GM10248 (cell line): ENCODE measurements at regions of chr9 and their contacts with region 1.

Region 1: DNA sequence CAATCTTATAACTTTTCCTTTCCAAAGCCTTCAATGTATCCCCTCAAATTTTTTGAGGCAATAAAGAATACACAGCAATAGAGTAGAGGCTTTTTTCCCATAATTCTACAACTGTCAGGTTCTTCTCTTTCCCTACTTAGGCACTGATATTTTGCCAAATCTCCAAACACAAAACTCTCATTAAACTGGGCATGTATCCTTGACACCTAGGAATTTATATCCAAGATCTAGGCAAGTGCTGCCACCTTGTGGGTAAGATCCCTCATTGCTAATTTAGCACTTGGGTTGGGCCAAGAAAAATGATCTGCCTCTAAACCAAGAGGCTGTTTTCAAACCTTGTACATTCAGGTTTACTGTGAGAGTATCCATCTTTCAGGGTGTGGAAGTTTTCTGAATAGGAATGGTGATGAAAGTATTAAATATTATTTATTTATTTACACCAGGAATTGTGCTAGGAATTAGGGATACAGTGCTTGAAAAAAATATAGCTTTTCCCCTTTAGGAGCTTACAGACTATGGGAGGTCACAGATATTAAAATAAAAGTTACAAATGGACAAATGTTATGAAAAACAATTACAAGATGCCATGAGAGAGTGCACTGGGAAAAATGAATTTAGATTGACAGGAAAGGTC is 17.6 kb downstream of the TSTD2 start:
- DNase-seq: peak; percentile 63
- CTCF ChIP-seq: peak; percentile 82

Region 2: DNA sequence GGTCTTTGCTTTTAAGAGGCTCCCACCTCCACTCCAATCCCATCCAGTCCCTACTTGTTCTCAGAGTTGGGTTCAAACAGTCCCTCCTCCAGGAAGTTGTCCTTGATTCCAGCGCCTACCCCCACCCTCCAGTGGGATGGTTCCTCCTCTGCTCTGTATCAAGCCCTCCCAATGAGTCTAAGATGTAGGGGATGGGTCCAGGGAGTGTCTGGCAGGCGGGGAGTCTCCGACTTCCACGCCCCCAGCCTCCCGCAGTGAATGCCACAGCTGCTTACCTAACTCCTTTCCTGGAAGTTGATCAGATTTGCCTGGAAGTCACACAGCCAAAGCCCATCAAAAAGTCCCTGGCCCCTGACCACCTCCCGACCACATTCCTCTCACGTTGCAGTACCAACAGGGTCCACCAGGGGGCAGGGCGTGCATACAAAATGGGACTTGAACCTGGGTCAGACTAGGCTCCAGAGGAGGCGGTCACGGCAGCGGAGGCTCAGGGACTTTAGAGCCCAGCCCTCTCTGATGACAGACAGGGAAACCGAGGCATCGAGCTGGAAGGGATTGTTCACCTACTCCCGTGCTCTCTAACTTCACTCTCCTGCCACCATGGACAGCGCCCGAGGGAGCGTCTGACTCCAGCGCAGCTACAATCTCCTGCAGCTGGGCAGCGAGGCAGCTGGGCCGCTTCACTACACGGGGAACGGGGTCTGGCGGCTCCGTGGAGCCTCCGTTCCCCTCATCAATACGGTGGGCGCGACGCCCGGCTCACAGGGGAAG is 228.6 kb before region 1 on chr9:
- CTCF ChIA-PET with region 1: interaction called, 22 read pairs
- POLR2A ChIA-PET with region 1: no interaction called
- DNase-seq: peak; percentile 84
- CTCF ChIP-seq: peak; percentile 95

Region 3: GRCh38 chr9:97406620-97407177 is 208.9 kb before region 1 on chr9:
- CTCF ChIA-PET with region 1: interaction called, 13 read pairs
- POLR2A ChIA-PET with region 1: no interaction called
- DNase-seq: no peak
- CTCF ChIP-seq: no peak

Region 4: DNA sequence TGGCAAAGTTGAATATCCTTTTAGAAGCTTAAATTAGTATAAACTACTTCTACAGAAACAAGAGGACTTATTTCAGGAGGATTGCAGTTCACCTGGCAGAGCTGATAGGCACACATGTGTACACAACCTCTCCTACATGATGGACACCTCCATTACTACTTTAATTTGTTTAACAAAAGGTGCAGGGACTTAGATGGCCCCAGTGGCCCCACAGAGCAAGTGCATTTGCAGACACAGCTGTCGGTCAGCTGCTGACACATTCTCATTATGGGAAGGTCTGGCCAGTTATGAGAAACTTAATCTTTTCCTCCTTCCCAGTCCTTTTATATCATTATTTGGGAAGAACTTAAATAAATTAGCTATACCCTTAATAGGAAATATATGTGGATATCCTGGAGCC is 175.4 kb before region 1 on chr9:
- CTCF ChIA-PET with region 1: interaction called, 15 read pairs
- POLR2A ChIA-PET with region 1: no interaction called
- DNase-seq: no peak
- CTCF ChIP-seq: no peak

Region 5: GRCh38 chr9:97468658-97469448 is 146.7 kb before region 1 on chr9:
- CTCF ChIA-PET with region 1: interaction called, 402 read pairs
- POLR2A ChIA-PET with region 1: no interaction called
- DNase-seq: peak; percentile 69
- CTCF ChIP-seq: peak; percentile 92

Region 6: GRCh38 chr9:97632985-97633858 is 17.7 kb after region 1 on chr9 and contains the starts of genes NCBP1 and TSTD2:
- CTCF ChIA-PET with region 1: interaction called, 88 read pairs
- POLR2A ChIA-PET with region 1: interaction called, 3 read pairs
- DNase-seq: peak; percentile 94
- CTCF ChIP-seq: no peak

Region 7: GRCh38 chr9:97696803-97697601 is 81.4 kb after region 1 on chr9 and contains the start of gene XPA:
- CTCF ChIA-PET with region 1: interaction called, 10 read pairs
- POLR2A ChIA-PET with region 1: no interaction called
- DNase-seq: peak; percentile 99
- CTCF ChIP-seq: no peak

Region 8: DNA sequence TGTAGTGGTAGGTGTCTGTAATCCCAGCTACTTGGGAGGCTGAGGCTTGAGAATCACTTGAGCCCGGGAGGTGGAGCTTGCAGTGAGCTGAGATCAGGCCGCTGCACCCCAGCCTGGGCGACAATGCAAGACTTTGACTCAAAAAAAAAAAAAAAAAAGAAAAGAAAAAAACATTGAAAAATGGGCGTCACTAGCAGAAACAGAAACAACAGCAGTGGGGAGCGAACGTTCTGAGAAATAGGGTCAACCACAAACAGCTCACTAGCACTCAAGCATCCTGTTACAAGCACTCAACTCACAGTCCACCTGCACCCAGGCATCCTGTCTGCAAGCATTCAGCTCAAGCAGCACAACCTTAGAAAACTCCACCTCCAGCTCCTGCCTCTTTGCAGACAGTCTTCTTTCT is 486.3 kb after region 1 on chr9:
- CTCF ChIA-PET with region 1: no interaction called
- POLR2A ChIA-PET with region 1: no interaction called
- DNase-seq: peak; percentile 85
- CTCF ChIP-seq: no peak